ENCODE measurements at regions of chr14 and their contacts with region 1.

Region 1: GRCh38 chr14:34227834-34228649 is 234.0 kb downstream of the SPTSSA start:
- DNase-seq: no peak
- H3K4me3 ChIP-seq: no peak overlapping the region
- H3K27ac ChIP-seq: no peak overlapping the region
- H3K4me1 ChIP-seq: peaks cover 0 to 6% (median 0%) of the 10 kb centered on the region in 6 donors
- H3K27me3 ChIP-seq: peaks cover 0 to 4% (median 0%) of the 10 kb centered on the region in 7 donors
- CTCF ChIP-seq: peak; percentile 29 to 85 (median 66)
- POLR2A ChIP-seq: no peak

Region 2: GRCh38 chr14:34104489-34105397 is 123.3 kb before region 1 on chr14:
- intact Hi-C with region 1: loop called (anchors 5 kb)
- DNase-seq: no peak
- H3K4me3 ChIP-seq: no peak overlapping the region
- H3K27ac ChIP-seq: no peak overlapping the region
- H3K4me1 ChIP-seq: no peaks in the 10 kb centered on the region
- H3K27me3 ChIP-seq: no peaks in the 10 kb centered on the region
- CTCF ChIP-seq: no peak
- POLR2A ChIP-seq: no peak